Endothelial cell of umbilical vein (primary cell): ENCODE measurements at regions of chr13 and their contacts with region 1.

Region 1: DNA sequence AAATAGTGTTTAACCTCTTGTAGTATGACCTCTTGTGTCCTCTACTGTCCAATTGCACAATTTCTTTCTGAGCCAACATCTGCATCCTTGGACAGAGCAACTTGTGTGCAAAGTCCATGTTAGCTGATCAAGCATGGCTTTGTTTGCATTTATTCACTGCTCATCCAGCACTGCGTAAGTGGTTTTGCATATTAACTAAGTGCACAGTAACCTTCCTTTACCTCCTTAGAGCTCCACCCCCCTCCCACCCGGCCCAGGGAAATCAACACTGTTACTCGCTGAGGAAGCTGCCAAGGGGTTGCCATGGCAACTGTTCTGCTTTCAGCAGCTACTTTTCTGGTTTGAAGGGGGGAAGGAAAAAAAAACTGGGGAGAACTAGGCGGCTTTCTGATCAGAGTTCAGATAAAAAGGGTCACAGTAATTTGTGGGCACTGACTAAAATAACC is 153.5 kb upstream of the KLF12 start:
- DNase-seq: peak; percentile 69
- H3K4me3 ChIP-seq: no peak overlapping the region
- H3K27ac ChIP-seq: no peak overlapping the region
- H3K4me1 ChIP-seq: peaks cover 4% of the 10 kb centered on the region
- H3K27me3 ChIP-seq: no peaks in the 10 kb centered on the region
- CTCF ChIP-seq: no peak
- POLR2A ChIP-seq: no peak

Region 2: DNA sequence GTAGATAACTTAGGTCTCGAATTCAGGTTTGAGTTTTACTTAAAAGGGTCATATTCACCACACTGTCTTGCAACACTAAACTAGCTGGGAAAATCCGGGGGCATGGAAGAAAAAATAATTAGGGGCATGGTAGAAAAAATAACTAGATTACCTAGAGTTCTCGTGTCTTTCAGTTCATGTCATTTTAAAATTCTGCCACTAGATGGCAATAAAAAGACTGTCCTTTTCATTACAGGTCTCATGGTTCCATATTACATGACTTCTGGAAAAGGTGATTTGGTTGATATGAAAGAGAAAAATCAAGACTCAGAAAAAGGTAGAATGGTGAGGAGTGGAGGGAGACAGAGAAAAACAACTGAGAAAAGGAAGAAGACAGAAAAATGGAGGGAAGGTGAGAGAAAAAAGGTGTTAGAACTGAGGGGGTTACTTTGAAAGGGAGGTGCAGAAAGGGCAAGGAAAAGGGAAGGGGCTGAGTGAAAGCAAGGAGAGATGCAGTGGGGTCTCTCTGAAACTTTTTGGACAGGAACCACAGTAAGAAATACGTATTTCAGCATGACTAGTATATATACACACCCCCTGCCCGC is 452.5 kb before region 1 on chr13:
- CTCF ChIA-PET with region 1: interaction called, 89 read pairs
- POLR2A ChIA-PET with region 1: no interaction called
- dilution Hi-C with region 1: no loop called
- intact Hi-C with region 1: loop called (anchors 1 kb)
- DNase-seq: peak; percentile 55
- H3K4me3 ChIP-seq: no peak overlapping the region
- H3K27ac ChIP-seq: no peak overlapping the region
- H3K4me1 ChIP-seq: peaks cover 4% of the 10 kb centered on the region
- H3K27me3 ChIP-seq: no peaks in the 10 kb centered on the region
- CTCF ChIP-seq: peak; percentile 27 to 37
- POLR2A ChIP-seq: no peak

Region 3: DNA sequence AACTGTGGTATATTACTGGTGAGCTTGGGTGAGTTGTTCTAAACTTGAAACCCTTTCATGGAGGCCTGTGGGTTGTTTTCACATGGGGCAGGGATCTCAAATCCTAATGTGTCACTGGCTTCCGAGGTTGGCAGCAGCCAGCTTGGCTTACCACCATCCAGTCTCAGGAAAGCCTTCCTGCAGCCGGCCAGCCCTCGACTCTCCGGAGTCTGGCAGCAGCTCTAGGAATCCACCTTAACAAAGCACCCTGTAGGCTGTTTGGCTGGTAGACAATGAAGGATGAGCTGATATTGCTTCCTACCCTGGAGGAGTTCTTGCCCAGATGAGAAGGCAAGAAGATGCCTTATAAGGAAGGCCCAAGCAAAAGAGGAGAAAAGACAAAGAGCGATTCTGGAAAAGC is 341.9 kb before region 1 on chr13:
- CTCF ChIA-PET with region 1: interaction called, 14 read pairs
- POLR2A ChIA-PET with region 1: no interaction called
- dilution Hi-C with region 1: no loop called
- intact Hi-C with region 1: loop called (anchors 5 kb)
- DNase-seq: peak; percentile 37
- H3K4me3 ChIP-seq: no peak overlapping the region
- H3K27ac ChIP-seq: no peak overlapping the region
- H3K4me1 ChIP-seq: no peaks in the 10 kb centered on the region
- H3K27me3 ChIP-seq: no peaks in the 10 kb centered on the region
- CTCF ChIP-seq: no peak
- POLR2A ChIP-seq: no peak

Region 4: GRCh38 chr13:74115138-74115537 is 172.6 kb before region 1 on chr13:
- CTCF ChIA-PET with region 1: interaction called, 11 read pairs
- POLR2A ChIA-PET with region 1: no interaction called
- dilution Hi-C with region 1: no loop called
- intact Hi-C with region 1: no loop called
- DNase-seq: peak; percentile 88
- H3K4me3 ChIP-seq: no peak overlapping the region
- H3K27ac ChIP-seq: peak overlapping the region; percentile 71
- H3K4me1 ChIP-seq: peaks cover 55% of the 10 kb centered on the region
- H3K27me3 ChIP-seq: no peaks in the 10 kb centered on the region
- CTCF ChIP-seq: no peak
- POLR2A ChIP-seq: no peak

Region 5: DNA sequence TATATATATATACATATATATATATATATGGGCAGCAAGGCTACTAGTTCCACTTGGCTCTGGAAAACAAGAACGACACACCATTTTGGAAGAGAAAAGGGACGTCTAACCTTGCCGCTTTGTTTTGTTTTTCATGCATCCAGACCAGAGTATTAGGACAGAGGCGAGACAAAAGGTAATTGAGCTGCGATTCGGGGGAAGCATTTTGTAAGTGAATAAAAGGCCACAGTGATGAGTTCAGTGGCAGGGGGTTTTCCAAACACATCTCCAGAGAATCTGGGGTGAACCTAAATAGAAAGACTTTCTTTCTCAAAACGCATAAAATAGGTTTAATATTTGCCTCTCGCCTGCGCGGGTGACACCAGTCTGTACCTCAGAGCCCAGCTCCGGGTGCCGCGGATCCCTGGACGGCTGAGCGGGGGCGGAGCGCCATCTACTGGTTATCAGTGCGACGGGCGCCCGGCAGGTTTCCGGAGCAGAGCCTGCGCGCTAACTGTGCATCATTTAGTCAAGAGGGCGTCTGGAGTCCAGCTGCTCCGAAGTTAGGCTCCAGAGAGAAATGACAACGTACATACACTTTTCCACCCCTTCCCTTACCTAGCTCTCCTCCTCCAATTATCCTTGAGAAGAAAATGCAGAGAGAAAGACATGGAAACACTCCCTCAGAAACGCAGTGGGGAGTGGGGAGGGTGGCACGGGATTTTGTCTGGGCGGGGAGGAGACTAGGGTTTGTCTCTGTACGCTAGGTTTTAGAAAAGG is 931.9 kb after region 1 on chr13:
- CTCF ChIA-PET with region 1: interaction called, 51 read pairs
- POLR2A ChIA-PET with region 1: no interaction called
- dilution Hi-C with region 1: no loop called
- intact Hi-C with region 1: loop called (anchors 1 kb)
- DNase-seq: peak; percentile 66
- H3K4me3 ChIP-seq: peak overlapping the region in 2 of 3 experiments; percentile 22 to 30
- H3K27ac ChIP-seq: no peak overlapping the region
- H3K4me1 ChIP-seq: peaks cover 3% of the 10 kb centered on the region
- H3K27me3 ChIP-seq: peaks cover 0 to 4% of the 10 kb centered on the region in 2 experiments
- CTCF ChIP-seq: peak; percentile 96
- POLR2A ChIP-seq: no peak

Region 6: DNA sequence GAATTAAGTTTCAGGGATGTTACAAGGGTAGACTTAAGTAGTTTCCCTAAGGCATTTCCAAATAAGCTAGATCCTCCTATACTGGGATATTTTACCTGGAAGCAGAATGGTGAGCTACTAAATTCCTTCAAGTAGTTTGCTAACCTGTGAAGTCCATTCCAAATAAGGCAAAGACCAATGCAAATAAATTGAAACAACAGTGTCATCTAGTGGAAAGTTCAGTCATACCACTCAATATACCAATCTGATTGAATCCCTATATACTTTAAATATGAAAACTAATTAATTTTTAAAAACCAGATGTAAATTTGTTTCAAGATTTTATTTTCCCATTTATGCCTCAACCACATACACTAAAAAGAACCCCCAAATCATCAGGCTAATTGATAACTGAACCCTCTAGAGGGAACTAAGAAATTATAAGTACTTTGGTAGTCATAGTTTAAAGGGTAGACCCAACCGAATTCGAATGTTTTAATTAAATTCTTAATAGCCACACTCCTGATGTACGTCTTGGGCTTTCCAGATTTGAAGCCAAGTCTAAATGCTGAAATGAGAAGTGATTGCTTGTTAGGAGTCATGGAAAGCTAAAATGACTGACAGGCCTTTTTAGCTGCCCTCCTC is 970.5 kb after region 1 on chr13:
- CTCF ChIA-PET with region 1: interaction called, 25 read pairs
- POLR2A ChIA-PET with region 1: no interaction called
- dilution Hi-C with region 1: no loop called
- intact Hi-C with region 1: loop called (anchors 2 kb)
- DNase-seq: peak; percentile 65
- H3K4me3 ChIP-seq: no peak overlapping the region
- H3K27ac ChIP-seq: no peak overlapping the region
- H3K4me1 ChIP-seq: no peaks in the 10 kb centered on the region
- H3K27me3 ChIP-seq: peaks cover 13 to 33% of the 10 kb centered on the region in 2 experiments
- CTCF ChIP-seq: peak; percentile 35 to 37
- POLR2A ChIP-seq: no peak